Heart left ventricle (tissue), 16 donors: ENCODE measurements at regions of chr4 and their contacts with region 1.

Region 1: DNA sequence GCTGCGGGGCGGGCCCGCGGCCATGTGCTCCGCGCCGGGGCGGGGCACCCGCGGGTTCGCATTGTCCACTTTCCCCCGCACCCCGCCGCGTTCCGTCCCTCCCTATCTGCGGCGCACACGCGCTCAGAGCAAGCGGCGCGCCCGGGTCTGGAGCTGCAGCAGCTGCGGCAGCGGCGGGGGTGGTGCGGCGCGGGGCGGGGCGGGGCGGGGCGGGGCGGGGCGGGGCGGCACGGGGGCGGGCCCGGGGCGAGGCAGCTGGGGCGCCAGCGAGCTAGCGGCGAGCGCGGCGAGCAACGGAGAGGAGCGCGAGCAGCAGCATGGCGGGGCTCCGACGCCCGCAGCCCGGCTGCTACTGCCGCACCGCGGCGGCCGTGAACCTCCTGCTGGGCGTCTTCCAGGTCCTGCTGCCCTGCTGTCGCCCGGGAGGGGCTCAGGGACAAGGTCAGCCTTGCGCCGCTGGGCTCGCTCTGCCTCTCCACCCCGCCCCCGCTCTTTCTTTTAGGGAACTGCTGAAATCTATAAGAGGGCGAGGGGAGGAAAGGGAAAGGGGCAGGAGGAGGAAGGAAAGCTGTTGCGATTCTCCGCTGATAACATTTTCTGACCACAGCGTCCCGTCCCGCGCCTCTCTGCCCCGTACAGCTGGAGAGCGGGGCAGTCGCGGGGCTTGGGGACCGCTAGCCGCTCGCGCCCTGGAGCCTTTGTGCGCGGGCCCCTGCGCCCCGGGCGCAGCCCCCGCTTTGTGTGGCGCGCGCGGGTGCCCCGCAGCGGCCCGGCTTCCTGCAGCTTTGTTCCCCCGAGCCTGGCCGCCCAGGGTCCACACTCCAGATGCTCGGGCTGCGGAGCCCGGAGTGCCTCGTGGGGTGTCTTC is at the start of gene TMEM131L:
- DNase-seq: peak; percentile 73 to 87 (median 82)
- ATAC-seq: peak; percentile 67 to 93 (median 78)
- H3K4me3 ChIP-seq: peak within 1 kb of the TSS; percentile 60 to 99 (median 85)
- H3K27ac ChIP-seq: peak within 1 kb of the TSS in 11 of 12 donors; percentile 78 to 93 (median 86)
- H3K4me1 ChIP-seq: peaks cover 0 to 59% (median 28%) of the 10 kb centered on the region in 12 donors
- H3K27me3 ChIP-seq: no peaks in the 10 kb centered on the region
- CTCF ChIP-seq: peak in 5 of 12 donors; percentile 13 to 43 (median 30)
- POLR2A ChIP-seq: peak in 1 of 2 donors; percentile 65
- total RNA-seq, gene TMEM131L: 10.9 to 22.2 (median 19.9) TPM

Region 2: GRCh38 chr4:153074936-153075630 is 391.2 kb before region 1 on chr4:
- intact Hi-C with region 1: no loop called
- DNase-seq: no peak
- ATAC-seq: no peak
- H3K4me3 ChIP-seq: no peak overlapping the region
- H3K27ac ChIP-seq: no peak overlapping the region
- H3K4me1 ChIP-seq: no peaks in the 10 kb centered on the region
- H3K27me3 ChIP-seq: no peaks in the 10 kb centered on the region
- CTCF ChIP-seq: no peak
- POLR2A ChIP-seq: no peak

Region 3: GRCh38 chr4:153142700-153143438 is 323.4 kb before region 1 on chr4:
- intact Hi-C with region 1: loop called in 1 of 10 experiments (anchors 10 kb)
- DNase-seq: peak; percentile 62 to 82 (median 71)
- ATAC-seq: peak in 3 of 4 donors; percentile 78 to 85 (median 79)
- H3K4me3 ChIP-seq: peak overlapping the region in 4 of 12 donors; percentile 3 to 24 (median 14)
- H3K27ac ChIP-seq: no peak overlapping the region
- H3K4me1 ChIP-seq: peaks cover 0 to 12% (median 2%) of the 10 kb centered on the region in 12 donors
- H3K27me3 ChIP-seq: no peaks in the 10 kb centered on the region
- CTCF ChIP-seq: peak; percentile 66 to 91 (median 84)
- POLR2A ChIP-seq: no peak

Region 4: GRCh38 chr4:153344131-153345010 is 121.9 kb before region 1 on chr4 and contains the start of gene MND1:
- intact Hi-C with region 1: loop called in 7 of 10 experiments (anchors 5 to 10 kb)
- DNase-seq: peak; percentile 85 to 93 (median 87)
- ATAC-seq: peak; percentile 78 to 97 (median 93)
- H3K4me3 ChIP-seq: peak within 1 kb of the TSS; percentile 64 to 96 (median 78)
- H3K27ac ChIP-seq: peak within 1 kb of the TSS in 1 of 12 donors; percentile 3
- H3K4me1 ChIP-seq: peaks cover 0 to 25% (median 13%) of the 10 kb centered on the region in 12 donors
- H3K27me3 ChIP-seq: no peaks in the 10 kb centered on the region
- CTCF ChIP-seq: peak; percentile 95 to 99 (median 97)
- POLR2A ChIP-seq: no peak
- total RNA-seq, gene MND1: 0.30 to 1.3 (median 0.73) TPM in 3 of 9 donors, not detected in the others

Region 5: DNA sequence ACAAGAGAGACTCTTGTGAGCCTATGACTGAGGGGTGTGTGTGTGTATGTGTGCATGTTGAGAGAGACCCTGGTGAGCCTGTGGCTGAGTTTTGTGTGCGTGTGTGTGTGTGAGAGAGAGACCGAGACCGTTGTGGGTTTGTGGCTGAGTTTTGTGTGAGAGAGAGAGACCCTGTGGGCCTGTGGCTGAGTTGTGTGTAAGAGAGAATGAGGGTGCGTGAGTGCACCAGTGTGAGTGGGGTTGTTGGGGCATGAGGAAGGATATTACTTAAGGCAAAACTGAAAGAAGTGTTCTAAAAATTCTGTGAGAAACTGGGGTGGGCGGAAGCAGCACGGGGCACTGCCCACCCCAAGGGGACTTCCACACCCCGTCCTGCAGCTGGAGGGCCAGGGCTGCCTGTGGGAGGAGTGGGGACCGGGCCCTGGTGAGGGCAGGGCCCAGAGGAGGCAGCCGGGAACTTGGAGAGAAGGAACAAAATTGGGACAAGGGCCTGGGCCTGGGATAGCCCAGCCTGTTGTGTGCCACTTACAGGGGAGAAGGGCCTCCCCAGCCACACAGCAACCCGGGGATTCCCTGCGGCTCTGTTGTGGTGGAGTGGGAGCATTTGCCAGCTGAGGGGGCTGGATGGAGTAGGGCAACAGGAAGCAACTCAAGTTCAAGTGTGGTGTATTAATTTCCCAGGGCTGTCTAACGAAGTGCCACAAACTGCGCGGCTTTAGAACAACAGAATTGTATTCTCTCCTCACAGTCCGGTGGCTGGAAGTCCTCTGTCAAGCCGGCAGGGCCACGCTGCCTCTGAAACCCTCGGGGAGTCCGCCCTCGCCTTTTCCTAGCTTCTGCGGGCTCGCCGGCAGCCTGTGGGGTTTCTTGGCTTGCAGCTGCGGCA is 21.9 kb after region 1 on chr4:
- intact Hi-C with region 1: loop called in 1 of 10 experiments (anchors 2 kb)
- DNase-seq: peak; percentile 65 to 75 (median 67)
- ATAC-seq: peak; percentile 34 to 61 (median 48)
- H3K4me3 ChIP-seq: peak overlapping the region in 10 of 12 donors; percentile 1 to 46 (median 24)
- H3K27ac ChIP-seq: peak overlapping the region; percentile 33 to 87 (median 77)
- H3K4me1 ChIP-seq: peaks cover 17 to 69% (median 57%) of the 10 kb centered on the region in 12 donors
- H3K27me3 ChIP-seq: no peaks in the 10 kb centered on the region
- CTCF ChIP-seq: no peak
- POLR2A ChIP-seq: no peak

Region 6: GRCh38 chr4:153535772-153536513 is 69.6 kb after region 1 on chr4:
- intact Hi-C with region 1: loop called in 4 of 10 experiments (anchors 5 to 10 kb)
- DNase-seq: no peak
- ATAC-seq: no peak
- H3K4me3 ChIP-seq: no peak overlapping the region
- H3K27ac ChIP-seq: peak overlapping the region in 1 of 12 donors; percentile 10
- H3K4me1 ChIP-seq: peaks cover 4 to 83% (median 57%) of the 10 kb centered on the region in 12 donors
- H3K27me3 ChIP-seq: no peaks in the 10 kb centered on the region
- CTCF ChIP-seq: peak in 1 of 12 donors; percentile 8
- POLR2A ChIP-seq: no peak

Region 7: DNA sequence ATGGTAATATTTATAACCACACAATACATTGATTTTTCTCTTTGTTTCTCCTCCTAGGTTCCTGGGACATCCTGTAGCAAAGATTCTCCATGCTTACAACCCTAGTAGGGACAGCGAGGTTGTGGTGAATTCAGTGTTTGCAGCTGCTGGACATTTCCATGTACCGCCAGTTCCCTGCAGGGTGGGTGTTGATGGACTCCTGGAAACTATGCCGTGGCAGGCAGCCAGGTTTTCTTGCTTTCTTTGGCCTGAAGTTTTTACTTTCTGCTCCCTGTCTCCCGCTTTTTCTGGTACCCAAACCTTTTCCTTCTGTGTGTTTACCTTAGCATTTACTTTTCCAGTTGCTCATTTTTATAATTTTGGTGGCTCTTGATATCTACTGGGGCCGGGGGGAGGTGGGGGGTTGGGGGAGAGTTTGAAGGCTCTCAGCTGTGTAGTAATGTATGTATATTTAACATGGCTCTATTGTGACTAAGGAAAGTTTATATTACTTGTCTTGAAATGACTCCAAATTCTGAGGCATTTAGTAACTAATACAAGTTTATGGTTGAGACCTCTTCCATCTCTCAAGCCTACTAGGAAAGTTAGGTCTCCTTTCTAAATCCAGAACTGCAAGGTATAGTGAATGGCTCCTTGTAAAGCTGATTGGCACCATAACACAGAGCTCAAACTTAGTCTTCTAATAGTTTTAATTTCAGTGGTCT is 89.6 kb after region 1 on chr4:
- intact Hi-C with region 1: loop called in 2 of 10 experiments (anchors 5 kb)
- DNase-seq: peak; percentile 84 to 93 (median 88)
- ATAC-seq: peak; percentile 88 to 90 (median 88)
- H3K4me3 ChIP-seq: peak overlapping the region in 4 of 12 donors; percentile 29 to 45 (median 34)
- H3K27ac ChIP-seq: peak overlapping the region in 11 of 12 donors; percentile 66 to 90 (median 80)
- H3K4me1 ChIP-seq: peaks cover 0 to 41% (median 8%) of the 10 kb centered on the region in 12 donors
- H3K27me3 ChIP-seq: no peaks in the 10 kb centered on the region
- CTCF ChIP-seq: no peak
- POLR2A ChIP-seq: no peak

Region 8: GRCh38 chr4:153564630-153565525 is 98.6 kb after region 1 on chr4:
- intact Hi-C with region 1: loop called in 5 of 10 experiments (anchors 2 to 10 kb)
- DNase-seq: peak in 1 of 5 donors; percentile 39
- ATAC-seq: peak; percentile 59 to 86 (median 77)
- H3K4me3 ChIP-seq: no peak overlapping the region
- H3K27ac ChIP-seq: peak overlapping the region in 11 of 12 donors; percentile 42 to 80 (median 67)
- H3K4me1 ChIP-seq: peaks cover 0 to 48% (median 23%) of the 10 kb centered on the region in 12 donors
- H3K27me3 ChIP-seq: no peaks in the 10 kb centered on the region
- CTCF ChIP-seq: no peak
- POLR2A ChIP-seq: peak in 1 of 2 donors; percentile 9

Region 9: DNA sequence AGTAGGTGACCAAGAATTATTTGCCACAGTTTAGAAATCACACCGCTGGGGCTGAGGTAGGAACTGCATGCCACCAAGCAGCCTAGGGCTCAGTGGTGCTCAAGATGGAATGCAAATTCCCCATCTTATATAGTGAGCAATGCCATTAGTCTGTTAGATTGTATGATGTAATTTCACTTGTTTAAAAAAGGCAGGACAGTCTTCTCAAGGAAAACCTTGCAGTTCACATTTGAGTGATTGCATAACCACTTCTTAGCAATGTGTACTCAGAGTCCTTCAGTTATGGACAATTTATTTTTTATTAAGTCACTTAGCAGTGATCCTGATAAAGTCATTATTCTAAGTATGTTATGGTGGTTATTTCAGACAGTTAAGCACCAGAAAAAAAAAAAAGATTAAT is 465.5 kb after region 1 on chr4:
- intact Hi-C with region 1: no loop called
- DNase-seq: no peak
- ATAC-seq: no peak
- H3K4me3 ChIP-seq: no peak overlapping the region
- H3K27ac ChIP-seq: no peak overlapping the region
- H3K4me1 ChIP-seq: no peaks in the 10 kb centered on the region
- H3K27me3 ChIP-seq: peaks cover 0 to 4% (median 0%) of the 10 kb centered on the region in 9 donors
- CTCF ChIP-seq: no peak
- POLR2A ChIP-seq: no peak